AG04450 (cell line): ENCODE measurements at regions of chr2 and their contacts with region 1.

Region 1: GRCh38 chr2:240232961-240233893 is 92.8 kb upstream of the OTOS start:
- DNase-seq: no peak
- H3K4me3 ChIP-seq: peak overlapping the region; percentile 45
- H3K27ac ChIP-seq: no peak overlapping the region
- H3K27me3 ChIP-seq: peaks cover 3% of the 10 kb centered on the region
- CTCF ChIP-seq: peak; percentile 92

Region 2: GRCh38 chr2:240136013-240136670 is 97.1 kb before region 1 on chr2 and contains the start of gene COPS9:
- CTCF ChIA-PET with region 1: no interaction called
- POLR2A ChIA-PET with region 1: no interaction called
- DNase-seq: peak; percentile 64
- H3K4me3 ChIP-seq: peak within 1 kb of the TSS; percentile 92
- H3K27ac ChIP-seq: peak within 1 kb of the TSS; percentile 47
- H3K27me3 ChIP-seq: peaks cover 15% of the 10 kb centered on the region
- CTCF ChIP-seq: 0 out of 2 replicates have a peak, but pooled peaks have one; percentile 1
- polyA plus RNA-seq, gene COPS9: 322 and 360 TPM in 2 replicates

Region 3: GRCh38 chr2:240220371-240220770 is 12.9 kb before region 1 on chr2:
- CTCF ChIA-PET with region 1: interaction called, 22 read pairs
- POLR2A ChIA-PET with region 1: no interaction called
- DNase-seq: no peak
- H3K4me3 ChIP-seq: no peak overlapping the region
- H3K27ac ChIP-seq: no peak overlapping the region
- H3K27me3 ChIP-seq: no peaks in the 10 kb centered on the region
- CTCF ChIP-seq: no peak

Region 4: DNA sequence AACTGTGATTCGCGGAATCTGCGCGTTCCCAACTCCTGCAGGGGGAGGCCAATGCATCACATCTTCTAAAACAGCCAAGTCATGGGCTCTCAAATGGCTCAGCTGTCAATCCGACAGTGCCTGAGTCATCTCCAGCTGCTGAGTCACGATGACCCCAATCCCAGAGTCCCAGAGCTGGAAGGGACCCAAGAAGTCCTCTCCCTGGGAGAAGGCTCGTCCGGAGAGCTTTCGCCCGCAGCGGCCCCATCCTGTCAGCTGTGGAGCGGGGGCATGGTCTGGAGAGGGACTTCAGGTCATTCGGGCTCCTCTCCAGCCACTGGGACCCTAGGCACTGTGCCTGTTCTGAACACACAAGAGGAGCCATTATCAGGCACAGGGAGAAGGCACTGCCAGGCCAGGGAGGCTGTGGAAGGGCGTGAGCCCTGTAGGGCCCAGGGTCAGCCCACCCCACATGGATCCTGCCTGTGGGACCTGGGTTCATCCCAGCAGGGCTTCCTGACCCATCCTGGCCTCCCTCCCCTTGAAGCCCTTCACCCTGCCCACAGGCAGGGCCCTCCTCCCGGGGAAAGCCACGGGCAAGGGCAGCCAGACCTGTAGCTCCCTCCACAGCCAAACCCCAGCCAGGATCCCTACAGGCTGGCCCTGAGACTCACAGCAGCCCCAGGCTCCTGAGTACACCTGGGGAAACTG is 154.6 kb after region 1 on chr2:
- CTCF ChIA-PET with region 1: interaction called, 13 read pairs
- POLR2A ChIA-PET with region 1: interaction called, 10 read pairs
- DNase-seq: peak; percentile 91
- H3K4me3 ChIP-seq: no peak overlapping the region
- H3K27ac ChIP-seq: peak overlapping the region; percentile 92
- H3K27me3 ChIP-seq: no peaks in the 10 kb centered on the region
- CTCF ChIP-seq: peak; percentile 24; the same call in 1 of the 2 replicates

Region 5: DNA sequence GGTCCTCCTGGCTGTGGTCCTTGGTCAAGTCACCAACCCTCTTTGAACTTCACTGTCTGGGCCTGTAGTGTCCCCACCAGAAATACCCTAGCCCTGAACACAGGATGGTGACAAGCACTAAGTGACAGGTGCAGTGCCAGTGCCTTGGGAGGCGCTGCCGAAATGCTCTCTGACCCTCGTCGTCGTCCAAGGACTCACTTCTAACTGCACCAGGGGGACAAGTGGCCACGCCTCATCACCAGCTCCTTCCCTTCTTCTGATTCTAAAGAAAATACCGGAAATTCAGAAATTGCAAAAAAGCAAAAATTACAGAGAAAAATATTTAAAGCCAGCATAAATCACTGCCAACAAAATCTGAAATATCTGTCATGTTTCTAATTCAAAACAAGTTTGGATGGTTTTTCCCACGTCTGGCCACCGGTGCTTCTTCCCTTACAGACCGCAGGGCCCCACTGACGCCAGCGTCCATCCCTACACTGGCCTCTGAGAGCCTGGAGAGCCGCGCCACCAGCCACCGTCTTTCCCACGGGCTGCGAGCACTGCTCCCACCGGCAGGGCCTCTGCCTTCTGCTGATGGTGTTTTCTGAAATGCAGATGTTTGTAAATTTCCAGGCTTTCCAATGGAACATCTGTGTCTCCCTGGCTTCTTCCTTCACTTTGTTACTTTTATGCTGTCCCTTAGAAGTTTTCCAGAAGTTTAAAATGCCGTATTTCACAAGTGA is 164.9 kb after region 1 on chr2:
- CTCF ChIA-PET with region 1: no interaction called
- POLR2A ChIA-PET with region 1: no interaction called
- DNase-seq: no peak
- H3K4me3 ChIP-seq: no peak overlapping the region
- H3K27ac ChIP-seq: no peak overlapping the region
- H3K27me3 ChIP-seq: no peaks in the 10 kb centered on the region
- CTCF ChIP-seq: no peak

Region 6: GRCh38 chr2:240435457-240435947 is 202.3 kb after region 1 on chr2 and contains the start of gene GPC1:
- CTCF ChIA-PET with region 1: interaction called, 40 read pairs
- POLR2A ChIA-PET with region 1: interaction called, 3 read pairs
- DNase-seq: no peak
- H3K4me3 ChIP-seq: peak within 1 kb of the TSS; percentile 70
- H3K27ac ChIP-seq: peak within 1 kb of the TSS; percentile 93
- H3K27me3 ChIP-seq: no peaks in the 10 kb centered on the region
- CTCF ChIP-seq: no peak
- polyA plus RNA-seq, gene GPC1: 46.8 and 72.0 TPM in 2 replicates

Region 7: GRCh38 chr2:240499309-240500301 is 266.4 kb after region 1 on chr2:
- CTCF ChIA-PET with region 1: interaction called, 10 read pairs
- POLR2A ChIA-PET with region 1: no interaction called
- DNase-seq: no peak
- H3K4me3 ChIP-seq: no peak overlapping the region
- H3K27ac ChIP-seq: no peak overlapping the region
- H3K27me3 ChIP-seq: no peaks in the 10 kb centered on the region
- CTCF ChIP-seq: no peak